Caco-2 (cell line): ENCODE measurements at regions of chr11 and their contacts with region 1.

Region 1: GRCh38 chr11:14974515-14975251 is 2.5 kb upstream of the CALCA start:
- DNase-seq: peak; percentile 58 to 65
- H3K4me3 ChIP-seq: no peak overlapping the region
- H3K4me3 Mint-ChIP-seq: peak overlapping the region; percentile 62
- H3K27ac Mint-ChIP-seq: no peak overlapping the region
- H3K4me1 ChIP-seq: no peaks in the 10 kb centered on the region
- H3K4me1 Mint-ChIP-seq: no peaks in the 10 kb centered on the region
- H3K27me3 ChIP-seq: peaks cover 1% of the 10 kb centered on the region
- H3K27me3 Mint-ChIP-seq: peaks cover 22% of the 10 kb centered on the region
- CTCF ChIP-seq: peak; percentile 67 to 77

Region 2: GRCh38 chr11:15208378-15209222 is 233.9 kb after region 1 on chr11:
- CTCF ChIA-PET with region 1: interaction called, 3 read pairs
- POLR2A ChIA-PET with region 1: no interaction called
- intact Hi-C with region 1: loop called (anchors 10 kb)
- DNase-seq: peak; percentile 71 to 87
- H3K4me3 ChIP-seq: no peak overlapping the region
- H3K4me3 Mint-ChIP-seq: no peak overlapping the region
- H3K27ac Mint-ChIP-seq: no peak overlapping the region
- H3K4me1 ChIP-seq: no peaks in the 10 kb centered on the region
- H3K4me1 Mint-ChIP-seq: peaks cover 3% of the 10 kb centered on the region
- H3K27me3 ChIP-seq: no peaks in the 10 kb centered on the region
- H3K27me3 Mint-ChIP-seq: peaks cover 7% of the 10 kb centered on the region
- CTCF ChIP-seq: peak; percentile 92 to 96